Caco-2 (cell line): ENCODE measurements at regions of chr6 and their contacts with region 1.

Region 1: GRCh38 chr6:2634139-2634964 is 116.4 kb downstream of the MYLK4 start:
- DNase-seq: peak; percentile 89 to 93
- H3K4me3 ChIP-seq: peak overlapping the region; percentile 45
- H3K4me3 Mint-ChIP-seq: peak overlapping the region; percentile 77
- H3K27ac Mint-ChIP-seq: peak overlapping the region; percentile 72
- H3K4me1 ChIP-seq: peaks cover 12% of the 10 kb centered on the region
- H3K4me1 Mint-ChIP-seq: no peaks in the 10 kb centered on the region
- H3K27me3 ChIP-seq: no peaks in the 10 kb centered on the region
- H3K27me3 Mint-ChIP-seq: no peaks in the 10 kb centered on the region
- CTCF ChIP-seq: peak; percentile 96

Region 2: GRCh38 chr6:1596088-1596852 is 1038.1 kb before region 1 on chr6:
- CTCF ChIA-PET with region 1: no interaction called
- POLR2A ChIA-PET with region 1: no interaction called
- intact Hi-C with region 1: loop called (anchors 1 kb)
- DNase-seq: peak; percentile 60 to 78
- H3K4me3 ChIP-seq: no peak overlapping the region
- H3K4me3 Mint-ChIP-seq: peak overlapping the region; percentile 23
- H3K27ac Mint-ChIP-seq: no peak overlapping the region
- H3K4me1 ChIP-seq: peaks cover 21% of the 10 kb centered on the region
- H3K4me1 Mint-ChIP-seq: peaks cover 17% of the 10 kb centered on the region
- H3K27me3 ChIP-seq: no peaks in the 10 kb centered on the region
- H3K27me3 Mint-ChIP-seq: peaks cover 5% of the 10 kb centered on the region
- CTCF ChIP-seq: peak; percentile 85 to 94

Region 3: DNA sequence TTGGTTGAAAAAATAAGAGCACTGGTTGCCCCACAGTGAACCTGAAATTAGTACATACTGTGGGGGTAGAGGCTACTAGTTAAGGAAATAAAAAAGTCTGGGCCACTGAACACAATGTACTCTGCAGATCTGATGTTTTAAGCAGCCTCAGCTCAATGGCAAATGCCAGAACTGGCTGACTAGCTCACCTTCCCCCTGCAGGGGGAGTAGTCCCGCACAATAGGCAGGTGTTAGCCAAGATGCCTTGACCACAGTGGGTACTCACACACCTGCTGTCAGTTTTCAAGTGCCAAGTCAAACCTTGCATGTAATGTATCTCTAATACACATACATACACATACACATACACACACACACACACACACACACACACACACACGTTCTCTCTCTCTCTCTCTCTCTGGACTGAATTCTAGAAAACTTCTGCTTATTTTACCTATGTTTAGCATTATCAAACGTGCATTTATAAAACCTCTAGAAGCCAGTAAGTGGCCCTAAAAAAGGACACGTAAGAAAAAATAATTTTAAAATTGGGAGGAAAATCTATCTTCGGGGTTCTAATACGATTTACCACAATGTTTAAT is 425.0 kb before region 1 on chr6:
- CTCF ChIA-PET with region 1: interaction called, 28 read pairs
- POLR2A ChIA-PET with region 1: no interaction called
- intact Hi-C with region 1: loop called (anchors 5 kb)
- DNase-seq: peak; percentile 73 to 82
- H3K4me3 ChIP-seq: no peak overlapping the region
- H3K4me3 Mint-ChIP-seq: no peak overlapping the region
- H3K27ac Mint-ChIP-seq: no peak overlapping the region
- H3K4me1 ChIP-seq: no peaks in the 10 kb centered on the region
- H3K4me1 Mint-ChIP-seq: no peaks in the 10 kb centered on the region
- H3K27me3 ChIP-seq: no peaks in the 10 kb centered on the region
- H3K27me3 Mint-ChIP-seq: no peaks in the 10 kb centered on the region
- CTCF ChIP-seq: peak; percentile 63 to 84

Region 4: GRCh38 chr6:2448820-2449571 is 185.4 kb before region 1 on chr6:
- CTCF ChIA-PET with region 1: interaction called, 15 read pairs
- POLR2A ChIA-PET with region 1: no interaction called
- intact Hi-C with region 1: loop called (anchors 1 kb)
- DNase-seq: peak; percentile 68 to 70
- H3K4me3 ChIP-seq: peak overlapping the region; percentile 41
- H3K4me3 Mint-ChIP-seq: peak overlapping the region; percentile 85
- H3K27ac Mint-ChIP-seq: peak overlapping the region; percentile 90
- H3K4me1 ChIP-seq: peaks cover 14% of the 10 kb centered on the region
- H3K4me1 Mint-ChIP-seq: peaks cover 8% of the 10 kb centered on the region
- H3K27me3 ChIP-seq: no peaks in the 10 kb centered on the region
- H3K27me3 Mint-ChIP-seq: no peaks in the 10 kb centered on the region
- CTCF ChIP-seq: peak; percentile 65 to 81

Region 5: GRCh38 chr6:2596222-2596621 is 38.1 kb before region 1 on chr6:
- CTCF ChIA-PET with region 1: interaction called, 4 read pairs
- POLR2A ChIA-PET with region 1: no interaction called
- intact Hi-C with region 1: loop called (anchors 1 kb)
- DNase-seq: peak in 1 of 2 experiments; percentile 31
- H3K4me3 ChIP-seq: no peak overlapping the region
- H3K4me3 Mint-ChIP-seq: no peak overlapping the region
- H3K27ac Mint-ChIP-seq: no peak overlapping the region
- H3K4me1 ChIP-seq: no peaks in the 10 kb centered on the region
- H3K4me1 Mint-ChIP-seq: no peaks in the 10 kb centered on the region
- H3K27me3 ChIP-seq: no peaks in the 10 kb centered on the region
- H3K27me3 Mint-ChIP-seq: no peaks in the 10 kb centered on the region
- CTCF ChIP-seq: peak; percentile 19 to 48

Region 6: DNA sequence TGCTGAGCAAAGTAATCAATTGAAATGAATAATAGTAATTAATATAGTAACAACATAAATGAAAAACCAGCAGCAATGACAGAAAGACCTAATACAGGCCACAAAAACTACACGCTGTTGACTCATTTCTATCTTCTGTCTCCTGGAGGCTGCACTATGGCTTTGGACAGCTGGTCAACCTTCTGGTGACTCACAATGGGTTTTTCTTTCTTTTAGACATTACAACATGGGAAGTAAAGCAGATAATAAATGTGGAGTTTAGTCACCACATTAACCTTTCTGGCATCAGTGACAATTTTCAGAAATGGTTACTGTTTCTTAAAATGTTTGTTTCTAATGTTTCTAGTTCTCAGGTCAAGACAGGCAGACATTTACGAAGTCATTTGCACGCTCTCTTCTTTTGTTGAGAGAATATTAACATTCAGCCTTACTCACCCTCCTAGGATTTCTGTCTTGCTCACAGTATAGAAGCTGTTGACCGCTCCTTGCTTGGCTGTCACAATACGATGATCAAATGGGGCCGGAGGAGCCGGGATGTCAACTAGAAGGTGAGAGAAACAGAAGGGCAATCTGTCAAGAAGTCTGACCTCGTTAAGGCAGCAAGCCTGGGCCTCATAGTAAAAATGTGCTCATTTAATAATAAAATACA is 54.2 kb after region 1 on chr6:
- CTCF ChIA-PET with region 1: no interaction called
- POLR2A ChIA-PET with region 1: no interaction called
- intact Hi-C with region 1: no loop called
- DNase-seq: no peak
- H3K4me3 ChIP-seq: no peak overlapping the region
- H3K4me3 Mint-ChIP-seq: no peak overlapping the region
- H3K27ac Mint-ChIP-seq: no peak overlapping the region
- H3K4me1 ChIP-seq: peaks cover 6% of the 10 kb centered on the region; the same call in 1 of the 2 replicates
- H3K4me1 Mint-ChIP-seq: no peaks in the 10 kb centered on the region
- H3K27me3 ChIP-seq: no peaks in the 10 kb centered on the region
- H3K27me3 Mint-ChIP-seq: no peaks in the 10 kb centered on the region
- CTCF ChIP-seq: no peak

Region 7: DNA sequence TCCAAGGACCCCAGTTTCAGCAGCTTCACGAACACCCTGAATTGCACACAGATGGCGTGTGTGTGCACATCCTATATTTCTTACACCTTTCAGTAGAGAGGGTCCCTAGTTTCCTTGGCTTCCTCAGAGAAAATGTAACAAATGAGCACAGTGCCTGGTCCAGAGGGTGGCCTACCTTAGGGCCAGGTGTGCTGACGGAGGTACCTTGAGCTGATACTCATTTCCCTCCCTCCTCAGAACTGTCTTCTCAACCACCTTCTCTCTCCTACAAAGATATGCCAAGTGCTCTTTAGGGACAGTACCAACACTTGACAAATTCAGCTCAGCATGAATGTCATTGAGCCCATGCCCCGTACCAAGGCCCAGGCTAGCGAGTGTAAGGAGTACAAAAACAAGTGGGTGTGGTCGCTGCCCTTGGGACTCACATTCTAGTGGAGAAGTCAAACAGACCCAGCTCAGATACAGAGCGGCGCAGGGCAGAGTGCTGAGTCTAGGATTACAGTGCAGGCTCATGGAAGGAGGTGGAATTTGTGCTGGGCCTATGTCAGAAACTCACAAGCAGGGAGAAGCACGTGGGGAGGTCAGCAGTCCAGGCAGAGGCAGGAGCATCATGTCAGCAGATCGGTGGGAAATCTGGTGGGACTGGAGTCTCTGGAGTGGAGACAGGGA is 474.5 kb after region 1 on chr6:
- CTCF ChIA-PET with region 1: no interaction called
- POLR2A ChIA-PET with region 1: no interaction called
- intact Hi-C with region 1: no loop called
- DNase-seq: no peak
- H3K4me3 ChIP-seq: no peak overlapping the region
- H3K4me3 Mint-ChIP-seq: no peak overlapping the region
- H3K27ac Mint-ChIP-seq: no peak overlapping the region
- H3K4me1 ChIP-seq: no peaks in the 10 kb centered on the region
- H3K4me1 Mint-ChIP-seq: no peaks in the 10 kb centered on the region
- H3K27me3 ChIP-seq: no peaks in the 10 kb centered on the region
- H3K27me3 Mint-ChIP-seq: no peaks in the 10 kb centered on the region
- CTCF ChIP-seq: no peak